Activated B cell treated with CpG ODN at 0.5 μM for 24 hours (primary cell): ENCODE measurements at regions of chr2 and their contacts with region 1.

Region 1: DNA sequence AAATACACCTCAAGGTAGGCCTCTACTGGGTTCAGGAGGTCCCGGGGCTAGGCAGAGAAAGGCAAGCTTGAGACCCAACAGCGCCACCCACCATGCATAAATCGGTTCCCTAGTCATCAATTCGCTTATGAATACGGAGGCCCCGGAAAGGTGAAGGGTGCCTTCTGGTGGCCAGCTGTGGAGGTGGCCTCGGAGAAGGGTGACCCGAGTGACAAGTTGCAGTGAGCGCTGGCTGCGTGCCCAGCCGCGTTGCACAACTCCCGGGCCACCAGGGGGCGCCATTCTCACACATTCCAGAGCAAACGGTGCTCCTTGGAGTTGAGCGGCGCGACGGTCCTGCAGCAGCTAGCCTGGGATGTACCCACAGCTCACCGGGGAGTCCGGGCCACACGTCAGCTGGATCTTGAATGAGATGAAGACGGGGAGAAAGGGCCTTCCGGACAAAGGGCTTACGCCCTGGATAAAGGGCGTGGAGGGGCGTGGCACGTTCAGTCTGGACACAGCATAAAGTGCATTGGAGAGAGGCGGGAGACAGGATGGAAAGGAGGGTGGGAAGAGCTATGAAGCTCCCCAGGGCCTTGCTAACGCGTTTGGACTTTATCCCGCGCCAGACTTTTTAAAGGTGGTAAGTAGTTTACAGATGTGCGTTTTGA is 20.4 kb downstream of the TMSB10 start:
- DNase-seq: peak; percentile 97
- ATAC-seq: peak; percentile 86
- H3K4me3 Mint-ChIP-seq: peak overlapping the region; percentile 92
- H3K27ac Mint-ChIP-seq: peak overlapping the region; percentile 86
- H3K4me1 Mint-ChIP-seq: peaks cover 53% of the 10 kb centered on the region
- H3K27me3 Mint-ChIP-seq: no peaks in the 10 kb centered on the region
- CTCF ChIP-seq: peak; percentile 86

Region 2: DNA sequence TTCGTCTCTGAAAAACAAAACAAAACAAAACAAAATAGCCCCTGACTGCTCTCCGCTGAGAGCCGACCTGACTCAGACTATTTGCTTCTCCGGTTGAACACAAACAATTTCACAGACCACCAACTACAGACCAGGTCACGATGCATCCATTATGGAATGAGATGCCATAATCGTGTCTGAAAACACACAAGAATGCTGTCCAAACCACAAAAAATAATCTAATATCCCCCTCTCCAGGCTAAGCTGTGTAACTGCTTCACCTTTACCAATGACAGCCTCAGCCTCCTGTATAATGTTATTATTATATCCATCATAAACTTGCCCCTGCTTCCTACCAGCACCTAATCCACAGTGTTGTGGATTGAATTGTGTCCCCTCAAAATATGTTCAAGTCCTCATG is 294.8 kb before region 1 on chr2:
- CTCF ChIA-PET with region 1: no interaction called
- POLR2A ChIA-PET with region 1: no interaction called
- intact Hi-C with region 1: loop called (anchors 10 kb)
- DNase-seq: no peak
- ATAC-seq: no peak
- H3K4me3 Mint-ChIP-seq: no peak overlapping the region
- H3K27ac Mint-ChIP-seq: no peak overlapping the region
- H3K4me1 Mint-ChIP-seq: no peaks in the 10 kb centered on the region
- H3K27me3 Mint-ChIP-seq: peaks cover 2% of the 10 kb centered on the region
- CTCF ChIP-seq: no peak

Region 3: GRCh38 chr2:84856787-84857186 is 69.1 kb before region 1 on chr2:
- CTCF ChIA-PET with region 1: interaction called, 12 read pairs
- POLR2A ChIA-PET with region 1: no interaction called
- intact Hi-C with region 1: no loop called
- DNase-seq: no peak
- ATAC-seq: peak; percentile 98
- H3K4me3 Mint-ChIP-seq: no peak overlapping the region
- H3K27ac Mint-ChIP-seq: no peak overlapping the region
- H3K4me1 Mint-ChIP-seq: peaks cover 23% of the 10 kb centered on the region
- H3K27me3 Mint-ChIP-seq: no peaks in the 10 kb centered on the region
- CTCF ChIP-seq: no peak

Region 4: GRCh38 chr2:84876369-84876768 is 49.5 kb before region 1 on chr2:
- CTCF ChIA-PET with region 1: interaction called, 68 read pairs
- POLR2A ChIA-PET with region 1: interaction called, 33 read pairs
- intact Hi-C with region 1: no loop called
- DNase-seq: no peak
- ATAC-seq: no peak
- H3K4me3 Mint-ChIP-seq: no peak overlapping the region
- H3K27ac Mint-ChIP-seq: no peak overlapping the region
- H3K4me1 Mint-ChIP-seq: peaks cover 23% of the 10 kb centered on the region
- H3K27me3 Mint-ChIP-seq: no peaks in the 10 kb centered on the region
- CTCF ChIP-seq: no peak

Region 5: DNA sequence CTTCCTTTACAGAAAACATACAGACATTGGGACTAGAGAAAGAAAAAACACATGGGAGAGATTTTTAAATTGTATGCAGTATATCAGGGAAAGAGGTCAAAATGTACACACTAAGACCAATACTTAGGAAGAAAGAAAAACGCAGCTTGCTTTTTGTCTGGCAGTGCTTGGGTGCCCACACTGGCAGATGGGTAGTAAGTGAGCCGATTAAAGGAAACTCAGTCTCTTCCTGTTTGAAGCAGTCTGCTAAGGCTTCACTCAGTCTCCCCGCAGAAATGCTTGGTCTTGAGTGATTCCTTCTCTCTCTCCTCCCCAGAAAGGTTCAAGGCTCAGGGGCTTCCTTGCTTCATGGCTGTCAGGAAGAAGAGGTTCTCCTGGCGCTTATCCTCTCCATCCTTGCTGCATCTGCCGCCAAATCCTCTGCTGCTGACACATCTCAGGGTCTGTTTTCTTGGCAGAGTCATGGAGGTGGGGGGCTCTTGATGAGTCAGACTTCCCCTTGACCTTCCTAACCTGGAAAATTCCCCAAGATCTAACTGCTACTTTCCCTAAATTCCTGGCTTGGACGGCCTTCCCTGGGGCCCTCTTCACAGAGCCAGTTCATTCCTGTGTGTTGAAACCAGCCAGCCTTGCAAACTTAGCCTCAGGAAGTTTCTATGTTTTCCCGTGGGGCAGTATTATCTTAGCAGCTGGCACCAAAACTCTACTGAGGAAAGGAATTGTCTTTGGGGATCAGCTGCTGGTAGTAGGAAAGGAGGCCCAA is 30.9 kb before region 1 on chr2:
- CTCF ChIA-PET with region 1: interaction called, 23 read pairs
- POLR2A ChIA-PET with region 1: interaction called, 28 read pairs
- intact Hi-C with region 1: no loop called
- DNase-seq: no peak
- ATAC-seq: peak; percentile 68
- H3K4me3 Mint-ChIP-seq: peak overlapping the region; percentile 60
- H3K27ac Mint-ChIP-seq: peak overlapping the region; percentile 89
- H3K4me1 Mint-ChIP-seq: peaks cover 46% of the 10 kb centered on the region
- H3K27me3 Mint-ChIP-seq: no peaks in the 10 kb centered on the region
- CTCF ChIP-seq: no peak

Region 6: GRCh38 chr2:84946204-84947009 is 20.6 kb after region 1 on chr2:
- CTCF ChIA-PET with region 1: interaction called, 186 read pairs
- POLR2A ChIA-PET with region 1: interaction called, 59 read pairs
- intact Hi-C with region 1: loop called (anchors 1 kb)
- DNase-seq: peak; percentile 44
- ATAC-seq: peak; percentile 77
- H3K4me3 Mint-ChIP-seq: peak overlapping the region; percentile 72
- H3K27ac Mint-ChIP-seq: peak overlapping the region; percentile 97
- H3K4me1 Mint-ChIP-seq: peaks cover 54% of the 10 kb centered on the region
- H3K27me3 Mint-ChIP-seq: no peaks in the 10 kb centered on the region
- CTCF ChIP-seq: no peak

Region 7: DNA sequence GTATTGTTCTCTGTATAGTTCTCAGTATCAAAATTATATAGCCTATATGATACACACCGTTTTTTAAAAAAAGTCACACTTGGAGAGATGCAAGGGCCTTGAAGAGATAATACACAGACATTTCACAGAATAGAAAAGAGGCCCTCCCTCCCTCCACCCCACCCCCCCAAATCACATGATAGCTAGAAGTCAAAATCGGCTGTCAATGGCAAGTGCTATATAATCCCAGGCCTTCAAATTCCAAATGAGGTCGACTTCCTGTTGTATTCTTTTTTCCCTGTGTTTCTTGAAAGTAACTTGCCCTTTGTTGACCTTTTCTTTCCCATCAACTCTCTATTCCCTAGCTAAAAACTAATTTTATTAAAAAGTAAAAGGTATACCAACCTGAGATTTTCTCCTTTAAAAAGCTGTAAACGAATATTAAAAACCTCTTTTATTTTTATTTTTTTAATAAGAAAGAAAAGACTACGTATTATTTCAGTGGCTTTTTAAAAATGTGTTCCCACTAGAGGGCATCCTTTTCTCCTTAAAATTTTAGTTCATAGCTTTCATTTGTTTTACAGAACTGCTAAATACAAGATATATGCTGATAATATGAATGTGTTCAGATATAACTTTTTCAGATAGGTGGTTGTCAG is 91.7 kb after region 1 on chr2:
- CTCF ChIA-PET with region 1: interaction called, 29 read pairs
- POLR2A ChIA-PET with region 1: interaction called, 21 read pairs
- intact Hi-C with region 1: loop called (anchors 1 kb)
- DNase-seq: no peak
- ATAC-seq: no peak
- H3K4me3 Mint-ChIP-seq: no peak overlapping the region
- H3K27ac Mint-ChIP-seq: peak overlapping the region; percentile 11
- H3K4me1 Mint-ChIP-seq: peaks cover 61% of the 10 kb centered on the region
- H3K27me3 Mint-ChIP-seq: no peaks in the 10 kb centered on the region
- CTCF ChIP-seq: no peak